ENCODE measurements at regions of chr2 and their contacts with region 1.

Region 1: DNA sequence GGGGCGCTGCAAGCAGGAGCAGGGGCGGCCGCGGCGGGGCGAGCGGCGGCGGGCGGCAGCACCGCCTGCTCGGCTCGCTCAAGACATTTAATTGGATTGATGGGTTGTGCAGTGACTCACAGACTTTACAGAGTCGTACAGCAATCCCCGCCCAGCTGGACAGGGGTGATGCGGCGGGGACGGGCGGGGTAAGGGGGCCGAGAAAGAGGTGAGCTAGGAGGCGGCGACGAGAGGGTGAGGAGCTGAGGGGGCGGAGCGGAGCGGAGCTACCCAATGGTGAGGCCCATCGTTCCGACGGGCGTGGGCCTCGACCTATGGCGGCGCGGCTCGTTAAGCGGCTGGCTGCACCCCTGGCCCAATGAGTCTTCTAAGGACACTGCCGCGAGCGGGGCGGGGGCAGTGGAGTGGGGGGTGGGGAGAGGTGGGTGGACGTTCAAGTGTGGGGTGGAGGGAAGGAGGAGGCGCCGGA is 97.1 kb upstream of the SERTAD2 start:
- DNase-seq: peak; percentile 97
- CTCF ChIP-seq: peak; percentile 4

Region 2: DNA sequence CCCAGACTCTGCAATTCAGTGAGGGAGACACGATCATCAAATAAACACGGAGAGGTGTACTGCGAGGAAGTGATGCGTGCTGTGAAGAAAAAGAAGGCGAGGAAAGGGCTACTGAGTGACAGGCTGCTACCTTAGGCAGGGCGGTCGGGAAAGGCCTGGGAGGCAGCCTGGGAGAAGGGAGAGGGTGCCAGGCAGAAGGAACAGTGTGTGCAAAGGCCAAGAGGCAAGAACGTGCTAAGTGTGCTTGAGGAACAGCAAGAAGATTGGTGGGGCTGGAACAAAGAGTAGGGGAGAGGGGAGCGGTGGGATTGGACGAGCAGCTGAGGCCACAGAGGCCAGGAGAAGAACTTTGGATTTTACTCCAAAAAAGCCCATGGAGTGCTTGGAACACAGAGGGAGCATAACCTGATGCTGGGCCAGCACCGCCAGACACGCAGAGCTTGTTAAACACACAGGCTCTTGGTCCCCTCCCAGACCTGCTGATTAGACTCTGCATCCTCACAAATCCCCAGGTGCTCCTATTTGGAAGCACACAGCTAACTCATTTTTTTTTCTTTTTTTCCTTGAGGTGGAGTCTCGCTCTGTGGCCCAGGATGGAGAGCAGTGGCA is 127.5 kb before region 1 on chr2:
- CTCF ChIA-PET with region 1: no interaction called
- POLR2A ChIA-PET with region 1: no interaction called
- DNase-seq: no peak
- CTCF ChIP-seq: no peak

Region 3: GRCh38 chr2:64704161-64704560 is 46.7 kb before region 1 on chr2:
- CTCF ChIA-PET with region 1: interaction called, 4 read pairs
- POLR2A ChIA-PET with region 1: interaction called, 17 read pairs
- DNase-seq: no peak
- CTCF ChIP-seq: no peak

Region 4: DNA sequence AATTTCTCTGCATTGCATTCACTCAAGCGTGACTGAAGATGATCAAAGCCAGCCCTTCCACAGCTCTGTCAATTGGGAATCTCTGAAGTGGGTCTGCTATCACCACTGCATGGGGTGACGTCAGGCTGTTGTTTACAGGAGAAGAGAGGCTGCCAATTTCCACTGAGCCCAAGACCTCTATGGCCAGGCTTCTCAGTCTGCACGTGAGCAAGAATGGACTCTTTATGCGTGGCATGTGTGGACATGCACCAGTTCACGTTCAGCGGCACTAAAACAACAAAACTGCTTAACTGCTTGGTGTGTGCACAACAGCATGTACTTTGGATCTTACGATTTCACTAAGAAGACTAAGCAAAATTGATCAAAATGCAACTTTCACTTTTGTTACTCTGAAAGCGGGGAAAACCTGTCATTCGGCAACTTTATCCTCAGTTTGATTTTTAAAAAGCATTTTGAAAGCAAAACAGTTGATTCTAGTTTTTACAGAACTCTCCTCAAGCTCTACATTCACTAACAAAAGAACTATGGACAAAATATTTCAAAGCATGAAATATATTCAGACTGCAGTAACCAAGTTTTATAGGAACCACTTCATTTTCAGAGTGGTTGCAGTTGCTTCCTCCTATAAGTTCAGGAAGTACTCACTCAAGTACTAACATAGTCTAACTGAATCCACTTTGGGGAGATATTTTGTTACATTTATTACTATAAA is 20.1 kb before region 1 on chr2:
- CTCF ChIA-PET with region 1: interaction called, 11 read pairs
- POLR2A ChIA-PET with region 1: interaction called, 9 read pairs
- DNase-seq: no peak
- CTCF ChIP-seq: no peak

Region 5: DNA sequence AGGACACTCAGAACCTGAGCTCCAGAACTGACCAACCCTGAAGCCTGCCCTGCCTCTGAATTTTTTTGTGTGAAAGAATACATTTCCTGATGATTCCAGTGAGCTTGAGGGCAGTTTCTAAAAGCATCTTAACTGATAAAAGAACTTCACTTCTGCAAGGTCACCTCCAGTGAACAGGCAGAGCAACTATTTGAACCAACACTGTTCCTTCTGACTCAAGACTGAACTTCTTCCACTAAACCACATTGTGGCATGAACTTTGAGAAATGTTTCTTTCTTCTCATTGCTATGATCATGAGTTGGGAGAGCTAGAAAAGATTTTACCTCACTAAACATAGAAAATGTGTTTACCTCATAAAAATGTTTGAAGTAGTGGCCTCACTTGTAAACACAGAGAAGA is 13.3 kb before region 1 on chr2:
- CTCF ChIA-PET with region 1: interaction called, 15 read pairs
- POLR2A ChIA-PET with region 1: interaction called, 16 read pairs
- DNase-seq: no peak
- CTCF ChIP-seq: no peak

Region 6: DNA sequence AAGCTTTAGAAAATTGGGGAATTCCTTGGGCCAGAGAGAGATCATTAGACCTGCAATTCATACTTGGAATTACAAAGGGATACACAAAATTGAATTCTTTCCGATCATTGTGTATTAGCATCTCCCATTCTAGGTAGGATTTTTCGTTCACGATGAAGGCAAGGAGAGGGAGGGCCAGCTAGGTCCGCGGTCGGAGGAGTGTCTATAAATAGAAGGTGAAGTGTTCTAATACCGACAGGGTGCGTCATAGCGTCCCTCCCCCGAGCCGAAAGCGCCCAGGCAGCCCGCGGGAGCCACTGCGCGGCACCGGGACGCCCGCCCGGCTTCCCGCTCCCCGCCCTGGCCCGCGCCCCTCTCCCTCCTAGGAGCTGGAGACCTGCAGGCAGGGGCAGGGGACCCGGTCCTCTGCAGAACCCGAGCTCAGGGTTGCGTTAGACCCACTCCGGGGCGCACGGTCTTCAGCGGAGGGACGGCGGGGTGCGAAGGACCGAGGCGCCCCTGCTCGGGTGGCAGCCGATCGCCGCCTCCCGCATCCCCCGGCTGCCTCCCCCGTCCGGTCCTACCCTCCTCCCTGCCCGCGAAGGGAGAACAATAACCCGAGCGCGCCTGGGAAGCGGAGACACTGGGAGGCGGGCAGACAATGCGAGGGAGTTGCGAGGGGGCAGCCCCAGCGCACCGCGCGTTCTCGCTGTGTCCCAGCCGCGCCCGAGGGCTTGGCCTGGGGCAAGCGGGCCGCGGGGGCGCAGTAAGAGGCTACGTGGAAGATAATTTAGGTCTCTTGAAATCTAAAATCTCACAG is 17.0 kb after region 1 on chr2:
- CTCF ChIA-PET with region 1: interaction called, 8 read pairs
- POLR2A ChIA-PET with region 1: interaction called, 10 read pairs
- DNase-seq: peak; percentile 89
- CTCF ChIP-seq: no peak

Measured in GM10248 (cell line).